Activated CD8-positive, alpha-beta T cell treated with anti-CD3 and anti-CD28 coated beads, Interleukin-2, amount 10 ng/mL, durations not matched to agents 7 days and 5 days (primary cell): ENCODE measurements at regions of chr7 and their contacts with region 1.

Region 1: GRCh38 chr7:5665094-5666025 is 116.1 kb downstream of the RNF216 start:
- DNase-seq: peak; percentile 81
- ATAC-seq: peak; percentile 69
- H3K4me3 Mint-ChIP-seq: no peak overlapping the region
- H3K27ac Mint-ChIP-seq: no peak overlapping the region
- H3K4me1 Mint-ChIP-seq: peaks cover 22% of the 10 kb centered on the region
- H3K27me3 Mint-ChIP-seq: no peaks in the 10 kb centered on the region

Region 2: GRCh38 chr7:5567790-5568189 is 97.6 kb before region 1 on chr7:
- CTCF ChIA-PET with region 1: no interaction called
- POLR2A ChIA-PET with region 1: no interaction called
- DNase-seq: no peak
- ATAC-seq: no peak
- H3K4me3 Mint-ChIP-seq: no peak overlapping the region
- H3K27ac Mint-ChIP-seq: no peak overlapping the region
- H3K4me1 Mint-ChIP-seq: peaks cover 33% of the 10 kb centered on the region
- H3K27me3 Mint-ChIP-seq: peaks cover 9% of the 10 kb centered on the region

Region 3: DNA sequence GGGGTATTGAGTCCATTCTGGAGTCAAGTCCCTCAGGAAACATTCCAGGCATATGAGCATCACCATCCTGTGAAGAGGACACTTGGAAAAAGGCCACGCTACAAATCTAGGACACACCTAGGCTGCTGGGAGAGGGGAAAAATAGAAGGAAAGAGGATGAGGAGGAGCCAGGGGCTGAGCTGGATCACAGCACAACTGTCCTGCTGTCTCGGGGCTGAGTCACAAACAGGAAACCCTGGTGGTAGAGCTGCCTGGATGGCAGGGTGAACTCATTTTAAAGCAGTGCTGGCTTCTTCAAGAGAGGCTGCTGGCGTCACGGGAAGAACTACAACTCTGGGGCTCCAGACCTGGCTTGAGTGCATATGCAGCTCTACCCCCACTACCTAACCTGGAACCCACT is 35.4 kb before region 1 on chr7:
- CTCF ChIA-PET with region 1: interaction called, 35 read pairs
- POLR2A ChIA-PET with region 1: no interaction called
- DNase-seq: peak; percentile 78
- ATAC-seq: peak; percentile 85
- H3K4me3 Mint-ChIP-seq: no peak overlapping the region
- H3K27ac Mint-ChIP-seq: peak overlapping the region; percentile 81
- H3K4me1 Mint-ChIP-seq: peaks cover 34% of the 10 kb centered on the region
- H3K27me3 Mint-ChIP-seq: no peaks in the 10 kb centered on the region

Region 4: DNA sequence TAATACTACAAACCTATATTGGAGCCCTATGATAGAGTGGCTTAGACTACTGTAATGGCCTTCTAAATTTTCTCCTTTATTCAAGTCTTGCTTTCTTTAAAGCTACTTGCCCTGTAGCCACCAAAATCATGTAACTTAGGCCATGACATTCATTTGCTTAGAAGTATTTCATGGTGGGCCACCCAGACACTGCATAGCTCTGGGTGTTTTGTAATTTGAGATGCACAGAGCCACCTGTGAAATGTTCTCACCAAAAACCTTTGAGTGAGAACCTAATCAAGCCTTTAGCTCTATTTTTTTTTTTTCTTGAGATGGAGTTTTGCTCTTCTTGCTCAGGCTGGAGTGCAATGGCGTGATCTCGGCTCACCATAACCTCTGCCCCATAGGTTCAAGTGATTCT is 17.5 kb before region 1 on chr7:
- CTCF ChIA-PET with region 1: interaction called, 13 read pairs
- POLR2A ChIA-PET with region 1: no interaction called
- DNase-seq: no peak
- ATAC-seq: no peak
- H3K4me3 Mint-ChIP-seq: no peak overlapping the region
- H3K27ac Mint-ChIP-seq: no peak overlapping the region
- H3K4me1 Mint-ChIP-seq: peaks cover 21% of the 10 kb centered on the region
- H3K27me3 Mint-ChIP-seq: no peaks in the 10 kb centered on the region

Region 5: DNA sequence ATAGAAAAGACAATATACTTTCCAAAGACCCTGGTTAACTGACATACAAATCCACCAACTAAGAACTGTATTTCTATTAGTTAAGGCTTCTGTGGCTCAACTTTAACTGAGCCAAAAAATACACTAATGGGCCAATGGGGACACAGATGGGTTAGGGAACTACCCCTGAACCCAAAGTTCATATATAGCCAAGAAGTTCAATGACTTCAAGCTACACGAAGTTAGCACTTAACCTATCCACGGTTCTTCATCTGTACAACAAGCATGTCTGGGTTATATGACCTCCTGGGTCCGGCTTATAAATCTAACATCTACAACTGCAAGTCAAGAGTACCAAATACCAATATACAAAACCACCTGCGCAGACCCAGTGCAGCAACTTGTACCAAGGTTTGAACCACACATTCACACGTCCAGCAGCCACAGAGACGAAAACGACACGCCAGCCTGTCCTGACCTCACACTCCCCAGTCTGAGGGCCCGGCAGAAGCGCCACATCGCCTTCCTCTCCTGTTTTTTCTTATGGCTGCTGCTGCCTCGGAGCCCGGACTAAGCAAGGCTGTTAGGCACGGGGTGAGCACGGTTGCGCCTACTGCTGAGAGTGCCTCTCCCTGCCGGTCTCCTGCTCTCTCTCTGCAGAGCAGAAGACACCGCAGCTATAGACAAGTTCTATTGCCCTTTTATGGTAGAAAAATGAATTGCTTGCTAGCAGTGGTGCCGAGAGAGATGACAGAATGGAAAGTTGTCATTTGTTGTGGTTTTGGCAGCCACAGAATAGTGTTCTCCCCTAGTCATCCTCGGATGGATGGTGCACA is 29.8 kb after region 1 on chr7:
- CTCF ChIA-PET with region 1: interaction called, 102 read pairs
- POLR2A ChIA-PET with region 1: interaction called, 7 read pairs
- DNase-seq: peak; percentile 89
- ATAC-seq: peak; percentile 81
- H3K4me3 Mint-ChIP-seq: peak overlapping the region; percentile 73
- H3K27ac Mint-ChIP-seq: peak overlapping the region; percentile 89
- H3K4me1 Mint-ChIP-seq: peaks cover 94% of the 10 kb centered on the region
- H3K27me3 Mint-ChIP-seq: no peaks in the 10 kb centered on the region